Gastrocnemius medialis (tissue), 4 donors: ENCODE measurements at regions of chr6 and their contacts with region 1.

Region 1: DNA sequence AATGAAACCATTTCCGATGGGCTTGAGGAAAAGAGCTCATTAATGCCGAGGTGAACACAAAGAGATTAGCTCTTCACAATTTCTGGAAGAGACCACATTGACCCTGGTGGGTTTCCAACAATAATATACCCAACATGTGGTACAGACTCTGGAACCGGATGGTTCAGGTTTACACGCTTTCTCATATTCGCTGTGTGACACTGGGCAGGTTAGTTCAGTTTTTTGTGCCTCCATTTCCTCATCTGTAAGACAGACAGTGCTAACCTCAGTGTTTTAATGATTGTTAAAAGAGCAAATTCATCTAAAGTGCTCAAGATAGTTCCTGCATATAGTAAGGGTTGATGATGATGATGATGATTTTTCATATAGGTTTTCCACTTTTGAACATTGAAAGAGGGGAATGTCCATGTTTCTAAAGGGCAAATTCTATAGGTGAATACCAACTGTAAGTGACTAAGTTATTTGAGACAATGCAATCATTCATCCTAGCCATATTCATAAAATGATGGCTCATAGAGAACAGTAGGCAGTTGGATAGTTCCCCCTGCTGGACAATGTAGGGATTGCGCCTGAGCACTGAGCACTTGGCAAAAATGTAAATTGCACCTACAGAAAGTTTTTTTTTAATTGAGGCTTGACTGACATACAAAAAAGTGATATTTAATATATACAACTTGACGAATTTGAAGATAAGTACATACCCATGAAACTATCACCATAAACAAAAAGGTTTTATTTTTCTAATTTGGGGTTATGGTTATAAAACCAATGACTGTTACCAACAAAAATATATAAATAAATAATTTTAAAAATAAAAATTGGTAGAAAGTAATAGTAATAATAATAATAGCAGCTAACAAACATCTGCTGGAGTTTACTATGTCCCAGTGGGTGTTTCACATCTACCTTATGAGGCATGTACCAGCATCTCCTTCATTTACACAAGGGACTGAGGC is 2.1 kb upstream of the PERP start:
- DNase-seq: peak in 1 of 2 donors; percentile 40
- ATAC-seq: no peak
- H3K4me3 ChIP-seq: no peak overlapping the region
- H3K27ac ChIP-seq: no peak overlapping the region
- H3K4me1 ChIP-seq: peaks cover 0 to 3% of the 10 kb centered on the region in 2 donors
- H3K27me3 ChIP-seq: peaks cover 18 to 38% (median 27%) of the 10 kb centered on the region in 3 donors
- CTCF ChIP-seq: peak; percentile 76 to 97 (median 85)
- POLR2A ChIP-seq: no peak

Region 2: GRCh38 chr6:137866914-137867684 is 242.2 kb before region 1 on chr6 and contains the start of gene TNFAIP3:
- in situ Hi-C with region 1: no loop called
- intact Hi-C with region 1: loop called (anchors 2 kb)
- DNase-seq: peak; percentile 86 to 91
- ATAC-seq: peak; percentile 89 to 90
- H3K4me3 ChIP-seq: peak within 1 kb of the TSS; percentile 67 to 96 (median 86)
- H3K27ac ChIP-seq: peak within 1 kb of the TSS; percentile 85 to 88 (median 86)
- H3K4me1 ChIP-seq: peaks cover 20 to 36% of the 10 kb centered on the region in 2 donors
- H3K27me3 ChIP-seq: no peaks in the 10 kb centered on the region
- CTCF ChIP-seq: peak; percentile 71 to 97 (median 92)
- POLR2A ChIP-seq: peak; percentile 51 to 79
- total RNA-seq, gene TNFAIP3: 2.6 to 7.1 (median 4.7) TPM

Region 3: GRCh38 chr6:138001750-138002349 is 107.5 kb before region 1 on chr6:
- in situ Hi-C with region 1: loop called (anchors 5 kb)
- intact Hi-C with region 1: loop called (anchors 1 kb)
- DNase-seq: no peak
- ATAC-seq: no peak
- H3K4me3 ChIP-seq: no peak overlapping the region
- H3K27ac ChIP-seq: no peak overlapping the region
- H3K4me1 ChIP-seq: no peaks in the 10 kb centered on the region
- H3K27me3 ChIP-seq: no peaks in the 10 kb centered on the region
- CTCF ChIP-seq: peak; percentile 47 to 80 (median 70)
- POLR2A ChIP-seq: no peak